ENCODE measurements at regions of chr22 and their contacts with region 1.

Region 1: GRCh38 chr22:19909350-19910179 is 32.0 kb upstream of the COMT start:
- DNase-seq: peak; percentile 83
- ATAC-seq: peak; percentile 88
- H3K4me3 ChIP-seq: no peak overlapping the region
- H3K4me3 Mint-ChIP-seq: no peak overlapping the region
- H3K27ac ChIP-seq: no peak overlapping the region
- H3K27ac Mint-ChIP-seq: no peak overlapping the region
- H3K4me1 ChIP-seq: no peaks in the 10 kb centered on the region
- H3K4me1 Mint-ChIP-seq: peaks cover 1% of the 10 kb centered on the region
- H3K27me3 ChIP-seq: no peaks in the 10 kb centered on the region
- H3K27me3 Mint-ChIP-seq: no peaks in the 10 kb centered on the region
- CTCF ChIP-seq: peak; percentile 75

Region 2: DNA sequence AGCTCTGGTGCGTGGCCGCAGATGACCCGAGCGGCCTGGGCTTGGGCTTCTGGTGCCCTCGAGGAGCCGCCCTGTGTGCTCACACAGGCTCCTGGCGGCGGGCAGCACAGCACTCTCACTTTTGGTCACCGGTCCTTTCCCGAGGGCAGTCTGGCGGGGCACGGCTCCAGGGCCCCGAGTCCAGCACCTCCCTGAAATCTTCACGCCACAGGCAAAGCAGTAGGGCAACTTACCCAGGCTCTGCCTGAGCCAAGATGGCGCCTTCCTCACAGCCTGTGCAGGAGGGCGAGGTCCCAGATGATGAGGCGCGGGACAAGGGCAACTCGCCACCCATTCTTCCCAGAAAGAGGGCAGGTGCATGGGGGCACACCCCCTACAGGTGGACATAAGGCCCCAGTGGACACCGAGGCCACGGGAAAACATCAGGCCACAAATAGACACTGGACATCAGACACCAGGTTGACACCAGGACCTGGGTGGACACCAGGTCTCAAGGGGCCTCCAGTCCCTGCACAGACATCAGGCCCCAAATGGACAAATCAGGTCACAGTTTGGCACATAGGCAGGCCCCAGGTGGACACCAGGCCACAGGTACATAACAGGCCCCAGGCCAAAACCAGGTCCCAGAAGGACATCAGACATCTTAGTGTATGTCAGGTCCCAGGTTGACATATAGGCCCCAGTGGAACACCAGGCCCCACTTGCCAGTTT is 252.9 kb before region 1 on chr22:
- CTCF ChIA-PET with region 1: no interaction called
- POLR2A ChIA-PET with region 1: no interaction called
- intact Hi-C with region 1: no loop called
- DNase-seq: no peak
- ATAC-seq: no peak
- H3K4me3 ChIP-seq: no peak overlapping the region
- H3K4me3 Mint-ChIP-seq: no peak overlapping the region
- H3K27ac ChIP-seq: no peak overlapping the region
- H3K27ac Mint-ChIP-seq: no peak overlapping the region
- H3K4me1 ChIP-seq: no peaks in the 10 kb centered on the region
- H3K4me1 Mint-ChIP-seq: no peaks in the 10 kb centered on the region
- H3K27me3 ChIP-seq: no peaks in the 10 kb centered on the region
- H3K27me3 Mint-ChIP-seq: no peaks in the 10 kb centered on the region
- CTCF ChIP-seq: no peak

Region 3: DNA sequence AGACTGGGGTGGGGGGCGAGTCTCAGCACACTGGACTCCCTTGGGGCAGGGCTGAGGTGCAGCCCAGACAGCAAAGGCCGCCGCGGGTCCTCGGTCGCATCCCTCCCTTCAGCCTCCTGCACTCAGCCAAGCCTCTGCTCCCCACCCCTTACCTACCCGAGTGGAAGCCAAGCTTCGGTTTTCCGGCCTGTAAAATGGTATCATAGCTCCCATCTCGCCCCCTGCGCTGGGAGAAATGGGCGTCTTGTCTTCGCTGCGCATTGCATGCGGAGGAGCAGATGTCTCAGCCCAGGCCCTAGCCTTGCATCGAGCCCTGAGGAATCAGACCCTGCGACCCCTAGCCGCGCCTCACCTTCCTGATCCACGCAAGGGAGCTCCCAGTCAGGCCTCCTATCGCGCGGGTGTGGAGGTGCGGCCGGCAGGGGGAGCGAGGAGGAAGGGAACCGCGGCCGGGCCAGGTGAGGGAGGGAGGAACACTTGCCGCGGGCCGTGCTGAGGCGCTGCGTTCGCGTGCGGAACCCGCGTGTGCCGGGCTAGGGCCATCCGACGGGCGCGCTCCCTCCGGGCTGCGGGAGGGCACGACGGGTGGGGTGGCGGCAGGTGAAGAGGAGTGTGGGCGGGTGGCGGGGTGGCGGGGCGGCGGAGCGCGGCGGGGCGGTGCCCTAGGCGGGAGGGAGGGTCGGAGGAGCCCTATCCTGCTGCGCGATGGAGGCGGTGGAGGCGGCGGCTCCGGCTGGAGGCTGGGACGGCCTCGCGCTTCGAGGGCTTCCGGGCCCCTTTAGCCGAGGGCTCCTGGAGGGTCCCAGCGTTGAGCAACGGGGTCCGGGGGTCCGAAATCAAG is 153.1 kb before region 1 on chr22:
- CTCF ChIA-PET with region 1: interaction called, 18 read pairs
- POLR2A ChIA-PET with region 1: no interaction called
- intact Hi-C with region 1: loop called (anchors 1 kb)
- DNase-seq: peak; percentile 72
- ATAC-seq: peak; percentile 53
- H3K4me3 ChIP-seq: peak overlapping the region in 4 of 5 experiments; percentile 31 to 51 (median 41)
- H3K4me3 Mint-ChIP-seq: peak overlapping the region; percentile 83
- H3K27ac ChIP-seq: no peak overlapping the region
- H3K27ac Mint-ChIP-seq: no peak overlapping the region
- H3K4me1 ChIP-seq: peaks cover 34 to 46% of the 10 kb centered on the region in 2 donors
- H3K4me1 Mint-ChIP-seq: peaks cover 33% of the 10 kb centered on the region
- H3K27me3 ChIP-seq: peaks cover 0 to 78% (median 40%) of the 10 kb centered on the region in 4 experiments
- H3K27me3 Mint-ChIP-seq: peaks cover 50% of the 10 kb centered on the region
- CTCF ChIP-seq: peak; percentile 51

Region 4: GRCh38 chr22:19772422-19773324 is 136.9 kb before region 1 on chr22:
- CTCF ChIA-PET with region 1: interaction called, 10 read pairs
- POLR2A ChIA-PET with region 1: no interaction called
- intact Hi-C with region 1: no loop called
- DNase-seq: peak; percentile 75
- ATAC-seq: peak; percentile 83
- H3K4me3 ChIP-seq: peak overlapping the region in 2 of 5 experiments; percentile 12 to 24
- H3K4me3 Mint-ChIP-seq: peak overlapping the region; percentile 81
- H3K27ac ChIP-seq: no peak overlapping the region
- H3K27ac Mint-ChIP-seq: peak overlapping the region; percentile 37
- H3K4me1 ChIP-seq: peaks cover 35 to 41% of the 10 kb centered on the region in 2 donors
- H3K4me1 Mint-ChIP-seq: peaks cover 38% of the 10 kb centered on the region
- H3K27me3 ChIP-seq: peaks cover 0 to 90% (median 56%) of the 10 kb centered on the region in 4 experiments
- H3K27me3 Mint-ChIP-seq: peaks cover 72% of the 10 kb centered on the region
- CTCF ChIP-seq: no peak

Region 5: GRCh38 chr22:19948057-19948760 is 38.6 kb after region 1 on chr22:
- CTCF ChIA-PET with region 1: interaction called, 11 read pairs
- POLR2A ChIA-PET with region 1: no interaction called
- intact Hi-C with region 1: no loop called
- DNase-seq: no peak
- ATAC-seq: no peak
- H3K4me3 ChIP-seq: no peak overlapping the region
- H3K4me3 Mint-ChIP-seq: no peak overlapping the region
- H3K27ac ChIP-seq: no peak overlapping the region
- H3K27ac Mint-ChIP-seq: no peak overlapping the region
- H3K4me1 ChIP-seq: peaks cover 10 to 16% of the 10 kb centered on the region in 2 donors
- H3K4me1 Mint-ChIP-seq: peaks cover 29% of the 10 kb centered on the region
- H3K27me3 ChIP-seq: no peaks in the 10 kb centered on the region
- H3K27me3 Mint-ChIP-seq: no peaks in the 10 kb centered on the region
- CTCF ChIP-seq: peak; percentile 61

Measured in B cell (primary cell).